Activated T-helper 2 cell treated with anti-CD3 and anti-CD28 coated beads, Interferon-gamma antibody, Interleukin-2, Interleukin-4, amounts not matched to agents 10 μg/mL and 5 μg/mL and 100 μg/mL, durations not matched to agents 14 hours and 24 hours and 36 hours (primary cell): ENCODE measurements at regions of chr7 and their contacts with region 1.

Region 1: GRCh38 chr7:152025077-152025936 is at the start of gene GALNT11:
- DNase-seq: peak; percentile 85
- H3K4me3 Mint-ChIP-seq: peak within 1 kb of the TSS; percentile 85
- H3K27ac Mint-ChIP-seq: peak within 1 kb of the TSS; percentile 68
- H3K4me1 Mint-ChIP-seq: peaks cover 20% of the 10 kb centered on the region
- H3K27me3 Mint-ChIP-seq: peaks cover 4% of the 10 kb centered on the region
- total RNA-seq, gene GALNT11: 21.3 and 22.8 TPM in 2 replicates

Region 2: GRCh38 chr7:151876899-151877777 is 148.2 kb before region 1 on chr7 and contains the start of gene PRKAG2:
- intact Hi-C with region 1: loop called (anchors 5 kb)
- DNase-seq: peak; percentile 52
- H3K4me3 Mint-ChIP-seq: peak within 1 kb of the TSS; percentile 93
- H3K27ac Mint-ChIP-seq: peak within 1 kb of the TSS; percentile 78
- H3K4me1 Mint-ChIP-seq: peaks cover 10% of the 10 kb centered on the region
- H3K27me3 Mint-ChIP-seq: peaks cover 25% of the 10 kb centered on the region
- total RNA-seq, gene PRKAG2: 13.3 and 14.9 TPM in 2 replicates

Region 3: DNA sequence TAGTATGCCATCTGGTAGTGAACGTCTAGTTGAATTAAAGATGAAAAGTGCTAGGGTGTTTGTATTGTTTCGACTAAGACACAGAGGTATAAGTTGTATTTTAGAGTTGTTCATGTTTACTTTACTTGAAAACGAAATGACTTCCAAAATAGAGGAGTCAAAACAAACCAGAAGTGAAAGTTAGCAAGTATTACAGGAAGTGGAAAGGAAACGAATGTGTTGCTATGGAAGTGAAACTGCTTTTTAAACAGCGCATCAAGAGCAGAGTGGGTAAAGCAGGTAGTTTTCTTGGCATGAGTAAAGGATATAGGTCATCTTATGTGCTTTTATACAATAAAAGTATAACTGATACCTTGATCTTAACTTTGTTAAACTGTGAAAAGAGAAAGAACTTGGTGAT is 89.1 kb before region 1 on chr7:
- intact Hi-C with region 1: loop called (anchors 10 kb)
- DNase-seq: no peak
- H3K4me3 Mint-ChIP-seq: peak overlapping the region; percentile 61
- H3K27ac Mint-ChIP-seq: peak overlapping the region; percentile 73
- H3K4me1 Mint-ChIP-seq: peaks cover 19% of the 10 kb centered on the region
- H3K27me3 Mint-ChIP-seq: peaks cover 12% of the 10 kb centered on the region

Region 4: DNA sequence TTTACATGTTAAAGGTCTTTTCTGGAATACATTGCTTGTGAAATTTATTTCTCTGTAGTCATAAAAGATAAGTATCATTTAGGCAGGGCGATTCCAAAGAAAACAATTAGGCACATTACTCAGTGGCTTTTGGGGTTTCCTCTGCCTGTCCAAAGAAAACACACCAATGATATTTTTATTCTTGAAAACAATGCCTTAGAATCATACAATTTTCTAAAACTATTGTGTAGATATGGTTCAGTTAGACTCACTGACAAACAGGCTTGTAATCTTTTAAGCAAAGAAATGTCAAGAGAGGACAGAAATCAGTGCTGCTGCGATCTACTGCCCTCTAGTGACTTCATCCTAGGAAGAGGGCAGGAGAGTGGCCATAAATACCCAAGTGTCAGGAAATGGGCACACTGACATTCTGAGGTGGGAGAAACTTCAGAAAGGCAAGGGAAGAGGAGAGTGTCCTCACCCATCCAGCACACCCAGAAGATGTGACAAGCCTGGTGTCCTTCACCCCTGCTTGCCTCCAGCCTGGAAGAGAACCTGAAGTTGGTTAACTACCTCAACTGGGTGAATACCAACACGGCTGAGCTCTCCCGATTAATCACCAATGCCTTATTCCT is 120.7 kb after region 1 on chr7:
- intact Hi-C with region 1: loop called (anchors 10 kb)
- DNase-seq: no peak
- H3K4me3 Mint-ChIP-seq: peak overlapping the region; percentile 17
- H3K27ac Mint-ChIP-seq: peak overlapping the region; percentile 89
- H3K4me1 Mint-ChIP-seq: peaks cover 43% of the 10 kb centered on the region
- H3K27me3 Mint-ChIP-seq: no peaks in the 10 kb centered on the region

Region 5: GRCh38 chr7:152675759-152676636 is 650.7 kb after region 1 on chr7 and contains the start of gene XRCC2:
- intact Hi-C with region 1: loop called (anchors 2 kb)
- DNase-seq: peak; percentile 94
- H3K4me3 Mint-ChIP-seq: peak within 1 kb of the TSS; percentile 93
- H3K27ac Mint-ChIP-seq: peak within 1 kb of the TSS; percentile 92
- H3K4me1 Mint-ChIP-seq: peaks cover 16% of the 10 kb centered on the region
- H3K27me3 Mint-ChIP-seq: no peaks in the 10 kb centered on the region
- total RNA-seq, gene XRCC2: 21.8 and 22.2 TPM in 2 replicates